WTC11 (cell line): ENCODE measurements at regions of chr1 and their contacts with region 1.

Region 1: DNA sequence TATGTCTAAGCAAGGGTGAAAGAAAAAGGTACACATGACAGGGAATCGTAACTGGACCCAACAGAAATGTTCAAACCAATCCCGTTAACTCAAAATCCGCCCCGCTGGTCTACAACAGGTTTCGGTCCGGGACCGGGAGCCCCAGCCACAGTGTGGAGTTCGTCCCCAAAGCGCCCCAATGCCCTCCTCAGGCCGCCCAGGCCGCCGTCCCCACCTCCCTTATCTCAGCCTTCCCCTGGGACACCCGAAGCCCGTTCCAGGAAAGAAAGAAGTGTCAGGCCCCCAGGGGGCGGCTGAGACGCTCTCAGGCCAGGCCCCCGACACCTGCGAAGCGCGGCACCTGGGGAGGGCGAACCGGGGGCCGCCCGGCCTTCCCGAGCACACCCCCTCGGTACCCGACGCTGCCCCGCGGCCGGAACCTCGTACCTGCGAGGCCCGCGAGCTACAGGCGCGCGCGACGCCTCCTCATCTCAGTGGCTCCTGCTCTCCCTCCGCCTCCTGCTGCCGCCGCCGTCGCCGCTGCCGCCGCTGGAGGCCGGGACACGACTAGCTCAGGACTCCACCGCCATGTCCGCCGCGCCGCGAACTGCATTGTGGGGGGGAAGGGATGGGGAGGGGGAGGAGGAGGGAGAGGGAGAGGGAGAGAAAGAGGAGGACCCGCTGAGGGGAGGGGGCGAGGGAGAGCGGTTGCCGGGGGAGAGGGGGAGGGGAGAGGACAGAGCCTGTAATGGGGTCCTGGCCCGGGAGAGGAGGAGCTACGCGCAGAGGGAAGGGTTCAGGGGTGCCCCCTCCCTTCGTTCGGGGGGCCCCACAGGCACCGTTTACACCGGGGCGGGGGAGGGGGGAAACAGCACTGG is at the start of gene TUT4:
- DNase-seq: peak; percentile 89
- ATAC-seq: peak; percentile 82
- H3K4me3 Mint-ChIP-seq: peak within 1 kb of the TSS; percentile 86
- H3K27ac Mint-ChIP-seq: peak within 1 kb of the TSS; percentile 81
- H3K4me1 Mint-ChIP-seq: peaks cover 36% of the 10 kb centered on the region
- H3K27me3 Mint-ChIP-seq: no peaks in the 10 kb centered on the region
- CTCF ChIP-seq: no peak
- total RNA-seq, gene TUT4: 57.4 to 63.6 TPM (median 63.3 TPM) in 3 replicates

Region 2: GRCh38 chr1:52592637-52593323 is 40.0 kb after region 1 on chr1:
- CTCF ChIA-PET with region 1: no interaction called
- POLR2A ChIA-PET with region 1: no interaction called
- DNase-seq: no peak
- ATAC-seq: no peak
- H3K4me3 Mint-ChIP-seq: no peak overlapping the region
- H3K27ac Mint-ChIP-seq: no peak overlapping the region
- H3K4me1 Mint-ChIP-seq: peaks cover 13% of the 10 kb centered on the region
- H3K27me3 Mint-ChIP-seq: no peaks in the 10 kb centered on the region
- CTCF ChIP-seq: no peak

Region 3: GRCh38 chr1:52632732-52633290 is 80.1 kb after region 1 on chr1 and contains the start of gene SHISAL2A:
- CTCF ChIA-PET with region 1: interaction called, 10 read pairs
- POLR2A ChIA-PET with region 1: interaction called, 3 read pairs
- DNase-seq: peak; percentile 73
- ATAC-seq: peak; percentile 67
- H3K4me3 Mint-ChIP-seq: peak within 1 kb of the TSS; percentile 67
- H3K27ac Mint-ChIP-seq: no peak within 1 kb of the TSS
- H3K4me1 Mint-ChIP-seq: peaks cover 31% of the 10 kb centered on the region
- H3K27me3 Mint-ChIP-seq: peaks cover 55% of the 10 kb centered on the region
- CTCF ChIP-seq: no peak
- total RNA-seq, gene SHISAL2A: 0.60 to 1.7 TPM (median 1.4 TPM) in 3 replicates